Activated CD4-positive, alpha-beta memory T cell treated with anti-CD3 and anti-CD28 coated beads for 36 hours (primary cell): ENCODE measurements at regions of chr12 and their contacts with region 1.

Region 1: GRCh38 chr12:51823875-51824565 is 24.5 kb downstream of the FIGNL2 start:
- DNase-seq: peak; percentile 38
- H3K4me3 Mint-ChIP-seq: no peak overlapping the region
- H3K27ac Mint-ChIP-seq: no peak overlapping the region
- H3K4me1 Mint-ChIP-seq: peaks cover 37% of the 10 kb centered on the region
- H3K27me3 Mint-ChIP-seq: no peaks in the 10 kb centered on the region

Region 2: DNA sequence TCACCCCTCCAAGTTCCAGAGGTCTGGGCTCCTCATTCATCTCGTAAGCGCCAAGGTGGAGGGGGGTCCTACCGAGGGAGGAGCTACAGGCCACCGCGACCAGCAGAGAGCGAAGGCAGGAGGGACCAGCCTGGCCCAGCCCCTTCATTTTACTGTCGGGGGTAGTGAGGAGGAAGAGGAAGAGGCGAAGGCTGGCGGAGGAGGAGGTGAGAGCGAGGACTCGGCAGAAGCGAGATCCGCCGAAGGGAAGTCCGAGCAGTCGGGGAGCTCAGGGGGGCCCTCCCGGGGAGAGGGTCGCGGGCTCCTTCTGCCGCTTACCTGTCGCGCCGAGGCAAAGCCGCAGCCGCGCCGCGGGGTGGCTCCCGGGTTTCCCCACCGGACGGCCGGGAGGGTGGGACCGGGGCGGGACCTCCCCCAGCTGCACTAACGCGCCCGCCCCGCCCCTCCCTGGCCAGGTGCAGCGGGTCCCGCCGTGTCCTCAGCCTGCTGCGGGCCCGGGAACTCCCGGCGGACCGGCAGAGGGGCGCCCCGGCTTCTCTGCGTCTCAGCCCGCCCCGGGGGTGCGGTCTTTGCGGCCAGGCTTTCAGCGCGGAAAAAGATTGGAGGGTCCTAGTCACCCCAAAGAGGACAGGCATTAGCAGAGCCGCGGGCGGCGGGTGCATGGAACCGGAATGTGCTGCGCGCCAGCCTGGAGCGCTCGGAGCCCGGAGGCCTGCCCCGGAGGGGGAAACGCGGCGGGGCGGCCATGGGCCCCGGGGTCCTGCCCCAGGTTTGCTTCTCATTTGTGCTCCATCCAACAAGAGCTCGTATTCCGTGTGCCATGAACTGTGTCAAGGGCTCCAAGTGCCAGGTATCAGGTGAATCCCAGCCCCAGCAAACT is 432.5 kb before region 1 on chr12 and contains the start of gene GALNT6:
- CTCF ChIA-PET with region 1: interaction called, 3 read pairs
- POLR2A ChIA-PET with region 1: no interaction called
- intact Hi-C with region 1: loop called (anchors 10 kb)
- DNase-seq: peak; percentile 71
- H3K4me3 Mint-ChIP-seq: peak within 1 kb of the TSS; percentile 85
- H3K27ac Mint-ChIP-seq: peak within 1 kb of the TSS; percentile 35
- H3K4me1 Mint-ChIP-seq: peaks cover 67% of the 10 kb centered on the region
- H3K27me3 Mint-ChIP-seq: no peaks in the 10 kb centered on the region
- total RNA-seq, gene GALNT6: 13.1 to 15.8 TPM

Region 3: DNA sequence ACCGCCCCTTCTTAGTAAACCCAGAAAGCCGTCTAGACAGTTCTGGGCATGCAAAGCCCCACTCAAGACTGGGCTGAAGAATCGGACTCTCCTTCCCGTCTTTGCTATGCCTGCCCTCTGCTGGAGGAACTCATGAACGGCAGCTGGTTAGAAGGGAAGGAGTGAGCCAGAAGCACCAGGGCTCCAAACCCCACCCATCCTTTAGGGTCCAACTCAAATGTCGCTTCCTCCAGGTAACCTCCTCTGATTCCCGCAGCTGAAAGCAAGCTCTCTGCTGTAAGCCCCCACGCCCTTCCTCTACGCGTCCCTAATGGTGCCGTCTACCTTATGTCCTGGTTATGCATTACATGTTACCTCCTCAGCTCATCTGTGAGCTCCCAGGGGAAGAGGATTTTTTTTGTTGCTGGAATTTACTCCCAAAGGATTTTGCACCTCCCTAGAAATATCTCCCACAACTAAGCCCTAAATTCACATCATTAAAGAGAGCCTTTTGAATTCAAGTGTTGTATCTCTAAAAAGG is 292.0 kb before region 1 on chr12:
- CTCF ChIA-PET with region 1: interaction called, 5 read pairs
- POLR2A ChIA-PET with region 1: no interaction called
- intact Hi-C with region 1: loop called (anchors 5 kb)
- DNase-seq: peak; percentile 82
- H3K4me3 Mint-ChIP-seq: no peak overlapping the region
- H3K27ac Mint-ChIP-seq: no peak overlapping the region
- H3K4me1 Mint-ChIP-seq: peaks cover 7% of the 10 kb centered on the region
- H3K27me3 Mint-ChIP-seq: peaks cover 1% of the 10 kb centered on the region

Region 4: DNA sequence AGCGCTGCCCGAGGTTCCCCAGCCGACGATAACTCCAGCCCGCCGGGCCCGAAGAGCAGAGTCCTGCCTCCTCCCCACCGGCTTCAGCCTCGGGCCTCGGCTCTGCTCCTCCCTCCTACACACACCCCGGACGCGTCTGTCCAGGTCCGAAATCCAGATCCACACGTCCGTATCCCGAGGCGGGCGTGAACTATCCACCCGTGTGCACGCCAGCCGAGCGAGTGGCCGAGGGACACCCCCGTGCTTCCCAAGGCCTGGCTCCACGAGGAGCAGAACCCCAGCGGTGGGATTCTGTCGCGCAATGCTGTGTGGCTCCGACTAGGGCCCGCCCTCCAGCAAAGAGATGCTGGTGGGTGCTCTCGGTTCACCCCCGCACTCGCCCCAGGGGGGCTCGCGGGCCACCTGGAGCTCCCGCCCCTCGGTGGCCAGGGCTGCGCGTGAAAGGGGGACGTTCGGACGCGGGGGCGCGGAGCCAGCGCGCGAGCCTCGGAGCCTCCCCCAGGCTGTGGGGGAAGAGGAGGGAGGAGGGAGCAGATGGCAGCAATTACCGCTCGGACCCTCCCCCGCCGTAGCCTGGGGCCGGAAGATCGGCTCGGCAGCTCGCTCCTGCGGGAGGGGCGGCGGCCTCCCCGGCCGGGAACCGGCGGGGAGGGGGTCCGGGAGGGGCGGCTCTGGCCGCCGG is 44.9 kb after region 1 on chr12:
- CTCF ChIA-PET with region 1: interaction called, 18 read pairs
- POLR2A ChIA-PET with region 1: no interaction called
- intact Hi-C with region 1: loop called (anchors 5 kb)
- DNase-seq: no peak
- H3K4me3 Mint-ChIP-seq: no peak overlapping the region
- H3K27ac Mint-ChIP-seq: no peak overlapping the region
- H3K4me1 Mint-ChIP-seq: peaks cover 10% of the 10 kb centered on the region
- H3K27me3 Mint-ChIP-seq: peaks cover 48% of the 10 kb centered on the region

Region 5: GRCh38 chr12:51923501-51924271 is 99.7 kb after region 1 on chr12:
- CTCF ChIA-PET with region 1: interaction called, 10 read pairs
- POLR2A ChIA-PET with region 1: no interaction called
- intact Hi-C with region 1: no loop called
- DNase-seq: peak; percentile 69
- H3K4me3 Mint-ChIP-seq: no peak overlapping the region
- H3K27ac Mint-ChIP-seq: no peak overlapping the region
- H3K4me1 Mint-ChIP-seq: peaks cover 12% of the 10 kb centered on the region
- H3K27me3 Mint-ChIP-seq: no peaks in the 10 kb centered on the region

Region 6: GRCh38 chr12:52073531-52074381 is 249.7 kb after region 1 on chr12:
- CTCF ChIA-PET with region 1: no interaction called
- POLR2A ChIA-PET with region 1: no interaction called
- intact Hi-C with region 1: no loop called
- DNase-seq: no peak
- H3K4me3 Mint-ChIP-seq: no peak overlapping the region
- H3K27ac Mint-ChIP-seq: no peak overlapping the region
- H3K4me1 Mint-ChIP-seq: peaks cover 40% of the 10 kb centered on the region
- H3K27me3 Mint-ChIP-seq: no peaks in the 10 kb centered on the region